ENCODE measurements at regions of chr19 and their contacts with region 1.

Region 1: DNA sequence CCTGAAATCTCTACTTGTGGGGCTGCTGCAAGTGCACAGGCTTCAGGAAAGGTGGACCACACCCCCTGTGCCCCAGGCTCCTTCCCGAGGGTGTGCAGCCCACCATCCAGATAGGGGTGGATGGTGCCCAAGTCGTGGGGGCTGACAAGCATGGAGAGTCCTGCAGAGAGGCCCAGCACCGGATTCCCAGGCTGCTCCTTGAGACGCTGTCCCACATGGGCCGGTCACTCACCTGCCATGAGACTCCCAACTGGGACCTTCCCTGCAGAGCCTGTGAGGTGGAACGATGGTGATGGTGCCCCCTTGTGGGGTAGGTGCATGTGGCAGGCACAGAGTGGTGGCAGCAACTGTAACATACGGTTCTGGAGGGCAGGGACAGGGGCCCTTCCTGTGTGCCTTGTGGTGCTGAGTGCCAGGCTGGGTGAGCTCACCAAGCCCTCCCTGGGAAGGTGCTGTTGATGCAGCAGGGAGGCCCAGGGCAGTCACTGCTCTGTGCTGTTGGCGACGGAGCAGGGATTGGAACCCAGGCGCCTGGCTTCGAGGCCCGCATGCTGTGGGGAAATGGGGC is 33.0 kb downstream of the PPP1R37 start:
- DNase-seq: peak; percentile 56 to 96
- H3K4me3 ChIP-seq: no peak overlapping the region
- H3K27ac ChIP-seq: no peak overlapping the region
- H3K4me1 ChIP-seq: peaks cover 0 to 10% (median 7%) of the 10 kb centered on the region in 4 experiments; a peak in 6 of 7 replicates
- H3K27me3 ChIP-seq: no peaks in the 10 kb centered on the region
- CTCF ChIP-seq: peak; percentile 83 to 99 (median 98)
- EP300 ChIP-seq: no peak
- POLR2A ChIP-seq: no peak
- RAD21 ChIP-seq: peak; percentile 78 to 86

Region 2: DNA sequence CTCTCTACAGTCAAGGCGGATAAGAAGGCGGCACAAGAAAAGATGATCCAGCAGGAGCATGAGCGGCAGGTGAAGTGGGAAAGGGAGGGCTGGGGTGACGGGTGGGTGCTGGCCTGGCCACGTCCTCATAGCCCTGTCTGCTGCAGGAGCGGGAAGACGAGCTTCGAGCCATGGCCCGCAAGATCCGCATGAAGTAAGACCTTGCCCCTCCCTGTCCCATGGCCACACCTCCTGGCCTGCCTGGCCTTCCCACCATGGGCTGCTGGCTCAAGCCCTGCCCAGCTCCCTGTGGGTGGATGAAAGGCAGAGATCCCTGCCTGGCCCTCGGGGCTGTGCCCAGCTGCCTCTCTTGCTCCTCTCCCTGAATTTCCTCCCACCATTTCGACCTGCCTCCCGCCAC is 57.0 kb before region 1 on chr19:
- CTCF ChIA-PET with region 1: interaction called, 12 read pairs
- POLR2A ChIA-PET with region 1: interaction called, 5 read pairs
- DNase-seq: no peak
- H3K4me3 ChIP-seq: no peak overlapping the region
- H3K27ac ChIP-seq: peak overlapping the region; percentile 10; the same call in 1 of the 2 replicates
- H3K4me1 ChIP-seq: no peaks in the 10 kb centered on the region
- H3K27me3 ChIP-seq: no peaks in the 10 kb centered on the region
- CTCF ChIP-seq: no peak
- EP300 ChIP-seq: no peak
- POLR2A ChIP-seq: no peak
- RAD21 ChIP-seq: no peak

Region 3: DNA sequence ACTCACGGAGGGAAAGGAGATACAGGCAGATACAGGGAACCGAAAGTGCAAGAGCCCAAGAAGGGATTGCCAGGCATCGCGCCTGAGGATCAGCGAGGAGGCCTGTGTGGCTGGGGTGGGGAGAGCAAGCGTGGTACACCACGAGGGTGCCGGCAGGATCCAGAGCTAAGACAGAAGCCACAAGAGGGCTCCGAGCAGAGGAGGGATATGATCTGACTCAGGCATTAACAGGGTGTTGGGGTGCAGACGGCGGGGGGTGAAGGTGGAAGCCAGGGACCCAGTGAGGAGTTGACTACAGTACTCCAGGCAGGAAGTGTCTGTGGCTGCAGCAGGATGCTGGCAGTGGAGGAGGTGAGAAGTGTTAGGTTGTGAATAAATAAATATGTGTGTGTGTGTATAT is 38.5 kb before region 1 on chr19:
- CTCF ChIA-PET with region 1: interaction called, 24 read pairs
- POLR2A ChIA-PET with region 1: interaction called, 21 read pairs
- DNase-seq: no peak
- H3K4me3 ChIP-seq: no peak overlapping the region
- H3K27ac ChIP-seq: no peak overlapping the region
- H3K4me1 ChIP-seq: peaks cover 2 to 12% (median 7%) of the 10 kb centered on the region in 4 experiments; a peak in 6 of 7 replicates
- H3K27me3 ChIP-seq: no peaks in the 10 kb centered on the region
- CTCF ChIP-seq: no peak
- EP300 ChIP-seq: no peak
- POLR2A ChIP-seq: no peak
- RAD21 ChIP-seq: no peak

Region 4: GRCh38 chr19:45103156-45103507 is 22.9 kb before region 1 on chr19:
- CTCF ChIA-PET with region 1: interaction called, 57 read pairs
- POLR2A ChIA-PET with region 1: interaction called, 8 read pairs
- DNase-seq: no peak
- H3K4me3 ChIP-seq: no peak overlapping the region
- H3K27ac ChIP-seq: no peak overlapping the region
- H3K4me1 ChIP-seq: peaks cover 0 to 28% (median 11%) of the 10 kb centered on the region in 4 experiments; a peak in 6 of 7 replicates
- H3K27me3 ChIP-seq: no peaks in the 10 kb centered on the region
- CTCF ChIP-seq: no peak
- EP300 ChIP-seq: no peak
- POLR2A ChIP-seq: no peak
- RAD21 ChIP-seq: no peak

Region 5: GRCh38 chr19:45146251-45146650 is 20.2 kb after region 1 on chr19:
- CTCF ChIA-PET with region 1: interaction called, 44 read pairs
- POLR2A ChIA-PET with region 1: interaction called, 6 read pairs
- DNase-seq: no peak
- H3K4me3 ChIP-seq: no peak overlapping the region
- H3K27ac ChIP-seq: no peak overlapping the region
- H3K4me1 ChIP-seq: no peaks in the 10 kb centered on the region; a peak in 1 of 7 replicates
- H3K27me3 ChIP-seq: peaks cover 0 to 3% (median 1%) of the 10 kb centered on the region in 4 experiments; a peak in 2 of 7 replicates
- CTCF ChIP-seq: peak in 1 of 3 experiments; percentile 11; a peak in 1 of 4 replicates
- EP300 ChIP-seq: no peak
- POLR2A ChIP-seq: no peak
- RAD21 ChIP-seq: no peak

Region 6: DNA sequence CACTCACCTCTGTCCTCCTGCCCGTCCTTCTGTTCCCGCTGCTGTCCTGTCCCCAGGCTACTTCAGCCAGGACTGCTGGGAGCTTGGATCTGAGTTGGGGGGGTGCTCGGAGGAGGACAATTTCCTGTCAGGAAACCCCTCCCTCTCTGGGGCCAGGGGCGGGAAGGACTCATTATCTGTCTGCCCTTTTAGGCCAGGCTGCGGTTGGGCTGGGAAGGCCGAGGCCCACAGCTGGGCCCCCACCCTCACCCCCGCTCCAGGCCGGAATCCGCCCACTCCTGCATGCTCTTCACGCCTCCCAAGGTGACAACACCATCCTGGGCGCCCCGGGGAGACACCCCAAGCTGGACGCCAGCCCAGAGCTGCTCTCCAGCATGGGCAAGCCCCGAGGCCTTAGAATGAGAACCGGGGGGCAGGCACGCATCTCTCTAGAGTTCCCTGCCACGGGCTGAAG is 119.4 kb after region 1 on chr19 and contains the start of gene EXOC3L2:
- CTCF ChIA-PET with region 1: no interaction called
- POLR2A ChIA-PET with region 1: no interaction called
- DNase-seq: no peak
- H3K4me3 ChIP-seq: no peak within 1 kb of the TSS
- H3K27ac ChIP-seq: no peak within 1 kb of the TSS
- H3K4me1 ChIP-seq: peaks cover 0 to 3% (median 1%) of the 10 kb centered on the region in 4 experiments; a peak in 3 of 7 replicates
- H3K27me3 ChIP-seq: peaks cover 0 to 8% (median 7%) of the 10 kb centered on the region in 4 experiments; a peak in 5 of 7 replicates
- CTCF ChIP-seq: no peak
- EP300 ChIP-seq: no peak
- POLR2A ChIP-seq: no peak
- RAD21 ChIP-seq: no peak
- total RNA-seq, gene EXOC3L2: 1.5 and 1.6 TPM in 2 replicates

Measured in H1 (cell line).